Uterus (tissue), 4 donors: ENCODE measurements at regions of chr11 and their contacts with region 1.

Region 1: DNA sequence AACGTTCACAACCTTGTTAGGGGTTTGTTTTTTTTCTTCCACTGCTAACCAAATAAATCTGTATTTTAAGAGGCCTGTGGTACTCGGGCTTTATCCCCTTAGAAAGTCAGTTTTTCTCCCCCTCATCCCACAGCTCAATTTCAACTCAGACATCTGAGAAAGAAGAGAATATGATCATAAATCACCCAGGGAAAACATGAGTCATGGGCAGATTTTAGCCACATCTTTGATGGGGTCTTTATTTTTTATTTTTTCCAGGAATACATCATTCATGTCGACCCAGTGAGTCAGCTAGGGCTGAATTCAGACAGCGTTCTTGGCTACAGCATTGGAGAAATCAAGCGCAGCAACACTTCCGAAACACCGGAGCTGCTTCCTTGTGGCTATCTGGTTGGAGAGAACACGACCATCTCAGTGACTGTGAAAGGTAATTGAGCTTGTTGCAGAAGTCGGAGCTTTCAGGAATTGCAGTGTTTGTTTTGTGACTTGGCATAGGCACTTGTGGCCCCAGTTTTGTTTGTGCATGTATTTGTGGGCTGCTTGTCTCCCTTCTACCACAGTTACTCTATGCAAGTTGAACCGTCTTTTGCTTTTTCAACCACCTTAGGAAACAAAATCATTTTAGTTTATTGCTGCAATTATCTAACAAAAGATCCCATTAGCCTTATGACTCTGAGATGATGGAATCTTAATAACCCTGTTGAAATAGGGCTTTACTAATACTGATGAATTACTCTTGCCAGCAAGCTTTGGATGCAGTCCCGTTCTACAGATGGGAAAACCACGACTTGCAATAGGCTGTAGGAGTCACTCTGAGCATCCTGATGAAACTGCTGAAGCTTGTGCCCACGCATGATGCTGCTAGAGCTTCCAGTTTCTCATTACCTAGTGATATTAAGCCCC is 62.7 kb downstream of the DBX1 start:
- DNase-seq: peak; percentile 69 to 89
- H3K4me3 ChIP-seq: no peak overlapping the region
- H3K27ac ChIP-seq: peak overlapping the region; percentile 77 to 89
- H3K4me1 ChIP-seq: peaks cover 6 to 9% of the 10 kb centered on the region in 2 donors
- H3K27me3 ChIP-seq: no peaks in the 10 kb centered on the region
- CTCF ChIP-seq: no peak
- POLR2A ChIP-seq: no peak

Region 2: GRCh38 chr11:20042118-20042518 is 55.5 kb before region 1 on chr11:
- intact Hi-C with region 1: loop called (anchors 10 kb)
- DNase-seq: no peak
- H3K4me3 ChIP-seq: no peak overlapping the region
- H3K27ac ChIP-seq: peak overlapping the region in 1 of 2 donors; percentile 22
- H3K4me1 ChIP-seq: no peaks in the 10 kb centered on the region
- H3K27me3 ChIP-seq: no peaks in the 10 kb centered on the region
- CTCF ChIP-seq: no peak
- POLR2A ChIP-seq: no peak